MCF 10A (cell line): ENCODE measurements at regions of chr9 and their contacts with region 1.

Region 1: DNA sequence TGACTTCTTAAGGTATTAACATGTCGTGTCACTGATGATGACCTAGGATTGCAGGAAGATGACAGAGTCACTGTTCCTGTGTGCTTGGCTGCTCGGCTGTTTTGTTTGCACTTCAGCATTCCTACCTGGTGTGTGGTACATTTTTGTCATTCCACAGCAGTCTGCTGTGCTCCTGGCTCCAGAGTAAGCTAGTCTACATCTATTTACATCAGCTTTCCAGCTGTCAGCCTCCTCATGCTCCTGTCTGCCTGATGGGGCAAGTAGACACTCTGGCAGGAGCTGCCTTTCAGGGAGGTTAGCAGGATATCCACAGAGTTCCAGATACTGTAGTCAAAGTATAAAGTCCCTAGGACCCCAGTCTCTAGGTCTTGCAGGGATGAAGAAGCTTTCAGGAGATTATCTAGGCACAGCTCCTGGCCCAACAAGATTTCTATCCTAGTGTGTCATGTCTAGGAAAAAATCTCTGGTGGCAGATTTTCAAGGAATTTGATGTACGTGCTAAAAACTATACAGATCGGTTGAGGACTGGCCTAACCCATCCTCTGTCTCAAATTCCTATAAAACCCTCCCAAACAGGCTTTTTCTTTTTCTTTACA is 28.4 kb downstream of the RUSC2 start:
- DNase-seq: peak; percentile 64
- H3K4me3 Mint-ChIP-seq: peak overlapping the region; percentile 25
- H3K27ac Mint-ChIP-seq: peak overlapping the region; percentile 89
- H3K4me1 Mint-ChIP-seq: peaks cover 48% of the 10 kb centered on the region
- H3K27me3 Mint-ChIP-seq: no peaks in the 10 kb centered on the region
- CTCF ChIP-seq: no peak

Region 2: GRCh38 chr9:35380619-35381018 is 137.7 kb before region 1 on chr9:
- CTCF ChIA-PET with region 1: no interaction called
- POLR2A ChIA-PET with region 1: no interaction called
- intact Hi-C with region 1: no loop called
- DNase-seq: no peak
- H3K4me3 Mint-ChIP-seq: no peak overlapping the region
- H3K27ac Mint-ChIP-seq: no peak overlapping the region
- H3K4me1 Mint-ChIP-seq: no peaks in the 10 kb centered on the region
- H3K27me3 Mint-ChIP-seq: no peaks in the 10 kb centered on the region
- CTCF ChIP-seq: no peak

Region 3: DNA sequence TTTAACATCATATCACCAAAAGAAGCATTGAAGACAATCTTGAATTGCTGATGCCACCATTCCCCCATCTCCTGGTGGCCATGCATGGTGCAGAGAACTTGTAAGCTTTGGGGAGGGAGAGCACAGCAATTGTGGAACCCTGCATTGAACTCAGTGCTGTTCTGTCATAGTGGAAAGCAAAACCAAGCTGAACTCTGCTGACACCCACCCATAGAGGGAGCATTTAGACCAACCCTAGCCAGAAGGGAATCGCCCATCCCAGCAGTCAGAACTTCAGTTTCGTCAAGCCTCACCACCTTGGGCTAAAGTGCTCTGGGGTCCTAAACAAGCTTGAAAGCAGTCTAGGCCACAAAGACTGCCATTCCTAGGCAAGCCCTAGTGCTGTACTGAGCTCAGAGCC is 65.8 kb before region 1 on chr9:
- CTCF ChIA-PET with region 1: no interaction called
- POLR2A ChIA-PET with region 1: no interaction called
- intact Hi-C with region 1: no loop called
- DNase-seq: peak; percentile 16
- H3K4me3 Mint-ChIP-seq: no peak overlapping the region
- H3K27ac Mint-ChIP-seq: no peak overlapping the region
- H3K4me1 Mint-ChIP-seq: peaks cover 8% of the 10 kb centered on the region
- H3K27me3 Mint-ChIP-seq: peaks cover 27% of the 10 kb centered on the region
- CTCF ChIP-seq: no peak

Region 4: DNA sequence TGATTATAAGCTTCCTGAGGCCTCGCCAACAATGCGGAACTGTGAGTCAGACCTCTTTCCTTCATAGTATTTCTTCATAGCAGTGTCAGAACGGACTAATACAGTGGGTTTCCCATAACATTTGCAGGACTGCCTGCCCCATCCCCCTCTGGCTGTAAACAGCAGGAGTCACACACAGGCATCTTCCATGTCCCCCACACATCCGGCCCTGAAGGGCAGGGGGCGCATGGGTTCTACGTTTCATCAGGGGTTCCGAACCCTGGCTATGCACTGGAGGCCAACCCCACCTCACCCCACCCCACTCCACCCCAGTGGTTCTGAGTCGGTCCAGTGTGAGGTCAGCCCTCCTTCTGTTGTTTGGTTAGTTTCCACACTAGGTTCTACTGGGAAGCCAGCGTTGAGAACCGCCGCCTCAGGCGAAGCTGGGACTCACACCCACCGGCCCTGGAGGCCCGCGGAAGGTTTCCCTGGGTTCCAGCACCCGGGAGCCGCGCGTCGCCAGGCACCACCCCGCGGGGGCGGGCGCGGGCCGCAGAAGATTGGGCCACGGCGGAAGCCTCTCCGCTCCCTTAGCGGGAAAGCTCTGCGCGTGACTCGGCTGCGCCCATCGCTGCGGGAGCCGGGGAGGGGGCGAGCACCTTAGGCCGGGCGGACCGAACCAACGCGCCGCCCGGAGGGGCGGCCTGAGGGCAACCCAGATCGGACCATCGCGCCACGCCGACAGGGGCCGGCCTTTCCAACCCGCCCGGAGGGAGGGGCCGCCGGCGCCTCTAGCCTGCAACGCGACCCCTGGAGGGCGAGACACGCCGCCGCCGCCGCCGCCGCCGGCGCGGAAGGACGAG is 28.8 kb before region 1 on chr9 and contains the start of gene RUSC2:
- CTCF ChIA-PET with region 1: interaction called, 3 read pairs
- POLR2A ChIA-PET with region 1: interaction called, 17 read pairs
- intact Hi-C with region 1: loop called (anchors 1 kb)
- DNase-seq: peak; percentile 85
- H3K4me3 Mint-ChIP-seq: peak within 1 kb of the TSS; percentile 93
- H3K27ac Mint-ChIP-seq: peak within 1 kb of the TSS; percentile 97
- H3K4me1 Mint-ChIP-seq: peaks cover 23% of the 10 kb centered on the region
- H3K27me3 Mint-ChIP-seq: no peaks in the 10 kb centered on the region
- CTCF ChIP-seq: peak; percentile 20
- total RNA-seq, gene RUSC2: 27.8 and 30.5 TPM in 2 replicates

Region 5: DNA sequence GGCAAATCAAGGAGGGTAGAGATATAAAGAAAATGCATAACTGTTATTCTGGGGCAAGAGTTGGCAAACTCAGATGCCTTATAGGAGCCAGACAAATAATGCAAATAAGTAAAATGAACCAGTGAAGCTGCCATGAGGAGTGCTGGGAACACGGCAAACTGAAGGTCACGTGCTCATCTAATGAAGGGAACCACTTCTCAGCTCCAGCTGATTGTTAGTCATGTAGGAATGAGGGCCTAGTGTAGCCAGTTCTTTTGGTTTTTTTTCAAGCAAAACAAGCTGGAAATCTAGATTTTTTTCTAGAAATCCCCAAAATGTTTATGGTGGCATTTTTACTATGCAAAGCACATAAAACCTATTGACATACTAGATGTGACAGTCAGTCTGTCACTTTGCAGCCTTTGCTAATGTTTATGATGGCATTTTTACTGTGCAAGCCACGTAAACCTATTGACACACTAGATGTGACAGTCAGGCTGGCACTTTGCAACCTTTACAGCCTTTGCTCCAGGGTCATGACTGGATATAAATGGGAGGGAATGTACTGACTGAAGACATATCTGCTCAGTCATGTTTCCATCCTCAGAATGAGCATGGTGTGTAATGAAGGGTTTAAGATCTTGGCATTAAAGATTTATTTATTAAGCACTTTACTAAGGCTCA is 11.0 kb after region 1 on chr9:
- CTCF ChIA-PET with region 1: interaction called, 6 read pairs
- POLR2A ChIA-PET with region 1: interaction called, 33 read pairs
- intact Hi-C with region 1: no loop called
- DNase-seq: no peak
- H3K4me3 Mint-ChIP-seq: no peak overlapping the region
- H3K27ac Mint-ChIP-seq: no peak overlapping the region
- H3K4me1 Mint-ChIP-seq: peaks cover 28% of the 10 kb centered on the region
- H3K27me3 Mint-ChIP-seq: no peaks in the 10 kb centered on the region
- CTCF ChIP-seq: no peak

Region 6: GRCh38 chr9:35538361-35539234 is 20.3 kb after region 1 on chr9:
- CTCF ChIA-PET with region 1: interaction called, 14 read pairs
- POLR2A ChIA-PET with region 1: interaction called, 3 read pairs
- intact Hi-C with region 1: no loop called
- DNase-seq: no peak
- H3K4me3 Mint-ChIP-seq: peak overlapping the region; percentile 28
- H3K27ac Mint-ChIP-seq: no peak overlapping the region
- H3K4me1 Mint-ChIP-seq: peaks cover 13% of the 10 kb centered on the region
- H3K27me3 Mint-ChIP-seq: no peaks in the 10 kb centered on the region
- CTCF ChIP-seq: no peak

Region 7: DNA sequence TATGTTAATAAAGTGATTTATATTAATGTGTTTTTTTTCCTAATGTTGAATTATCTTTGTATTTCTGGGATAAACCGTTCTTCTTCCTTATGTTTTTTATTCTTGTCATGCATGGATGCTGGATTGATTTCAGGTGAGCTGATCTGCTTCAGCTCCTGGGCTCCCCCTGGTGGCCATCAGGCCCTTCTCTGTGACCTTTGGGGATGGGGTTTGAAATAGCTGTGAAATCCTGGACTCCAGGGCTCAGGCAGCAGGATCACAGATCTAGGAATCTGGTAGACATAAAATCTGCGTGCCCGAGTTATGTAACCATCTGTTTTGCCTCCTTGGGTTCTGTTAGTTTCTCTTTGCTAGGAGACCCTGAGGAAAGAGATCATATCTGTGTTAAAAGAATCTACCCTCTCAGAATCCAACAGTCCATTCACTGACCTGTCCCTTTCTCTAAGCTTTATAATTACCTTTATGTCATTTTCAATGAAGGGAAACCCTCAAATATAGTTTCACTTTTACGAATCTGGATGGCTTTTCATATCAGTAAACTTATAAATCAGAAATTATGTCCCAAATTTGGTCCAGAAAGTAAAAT is 364.0 kb after region 1 on chr9:
- CTCF ChIA-PET with region 1: no interaction called
- POLR2A ChIA-PET with region 1: no interaction called
- intact Hi-C with region 1: no loop called
- DNase-seq: peak; percentile 80
- H3K4me3 Mint-ChIP-seq: no peak overlapping the region
- H3K27ac Mint-ChIP-seq: no peak overlapping the region
- H3K4me1 Mint-ChIP-seq: peaks cover 6% of the 10 kb centered on the region
- H3K27me3 Mint-ChIP-seq: peaks cover 16% of the 10 kb centered on the region
- CTCF ChIP-seq: peak; percentile 95